Activated CD8-positive, alpha-beta memory T cell treated with anti-CD3 and anti-CD28 coated beads, Interleukin-2, amount 10 ng/mL, durations not matched to agents 7 days and 5 days (primary cell): ENCODE measurements at regions of chr1 and their contacts with region 1.

Region 1: DNA sequence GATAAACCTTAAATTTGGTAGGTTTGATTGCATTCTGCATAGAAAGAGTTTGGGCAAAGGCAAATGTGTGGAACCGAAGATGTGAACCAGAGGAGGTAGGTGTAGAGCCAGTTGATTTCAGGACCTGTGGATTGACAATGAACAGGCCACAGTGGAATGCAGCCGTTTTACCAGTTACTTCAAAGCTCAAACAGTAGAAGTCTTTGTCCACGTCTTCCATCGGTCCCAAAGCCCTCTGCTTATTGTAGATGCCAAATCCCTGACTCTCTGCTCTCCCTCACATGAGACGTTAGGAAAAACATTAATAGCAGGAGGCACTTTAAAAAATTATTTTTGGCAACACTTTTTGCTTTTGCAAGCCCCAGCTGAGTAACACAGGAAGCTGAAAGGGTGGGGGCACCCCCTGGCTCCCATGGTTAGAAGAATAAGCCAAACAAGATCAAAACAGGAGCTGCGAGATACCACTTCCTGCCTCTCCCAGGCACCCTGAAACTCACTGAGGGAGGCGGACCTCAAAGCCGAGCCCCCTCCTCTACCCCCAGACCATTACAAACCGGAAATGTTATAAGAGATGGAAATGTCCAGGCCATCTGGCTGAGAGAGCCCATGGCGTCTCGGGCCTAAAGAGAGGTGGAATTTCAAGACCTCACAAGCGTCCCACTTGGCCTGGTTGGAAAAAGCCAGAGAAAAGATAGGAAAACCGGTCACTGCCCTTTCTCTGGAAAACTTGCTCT is 13.5 kb downstream of the TRAF3IP3 start:
- DNase-seq: peak; percentile 92
- ATAC-seq: peak; percentile 65
- H3K4me3 Mint-ChIP-seq: no peak overlapping the region
- H3K27ac Mint-ChIP-seq: no peak overlapping the region
- H3K4me1 Mint-ChIP-seq: peaks cover 41% of the 10 kb centered on the region
- H3K27me3 Mint-ChIP-seq: no peaks in the 10 kb centered on the region

Region 2: GRCh38 chr1:209755926-209756614 is 13.3 kb before region 1 on chr1 and contains the start of gene TRAF3IP3:
- CTCF ChIA-PET with region 1: interaction called, 105 read pairs
- DNase-seq: peak; percentile 95
- ATAC-seq: peak; percentile 76
- H3K4me3 Mint-ChIP-seq: peak within 1 kb of the TSS; percentile 95
- H3K27ac Mint-ChIP-seq: peak within 1 kb of the TSS; percentile 93
- H3K4me1 Mint-ChIP-seq: peaks cover 75% of the 10 kb centered on the region
- H3K27me3 Mint-ChIP-seq: no peaks in the 10 kb centered on the region
- total RNA-seq, gene TRAF3IP3: 351 to 406 TPM

Region 3: DNA sequence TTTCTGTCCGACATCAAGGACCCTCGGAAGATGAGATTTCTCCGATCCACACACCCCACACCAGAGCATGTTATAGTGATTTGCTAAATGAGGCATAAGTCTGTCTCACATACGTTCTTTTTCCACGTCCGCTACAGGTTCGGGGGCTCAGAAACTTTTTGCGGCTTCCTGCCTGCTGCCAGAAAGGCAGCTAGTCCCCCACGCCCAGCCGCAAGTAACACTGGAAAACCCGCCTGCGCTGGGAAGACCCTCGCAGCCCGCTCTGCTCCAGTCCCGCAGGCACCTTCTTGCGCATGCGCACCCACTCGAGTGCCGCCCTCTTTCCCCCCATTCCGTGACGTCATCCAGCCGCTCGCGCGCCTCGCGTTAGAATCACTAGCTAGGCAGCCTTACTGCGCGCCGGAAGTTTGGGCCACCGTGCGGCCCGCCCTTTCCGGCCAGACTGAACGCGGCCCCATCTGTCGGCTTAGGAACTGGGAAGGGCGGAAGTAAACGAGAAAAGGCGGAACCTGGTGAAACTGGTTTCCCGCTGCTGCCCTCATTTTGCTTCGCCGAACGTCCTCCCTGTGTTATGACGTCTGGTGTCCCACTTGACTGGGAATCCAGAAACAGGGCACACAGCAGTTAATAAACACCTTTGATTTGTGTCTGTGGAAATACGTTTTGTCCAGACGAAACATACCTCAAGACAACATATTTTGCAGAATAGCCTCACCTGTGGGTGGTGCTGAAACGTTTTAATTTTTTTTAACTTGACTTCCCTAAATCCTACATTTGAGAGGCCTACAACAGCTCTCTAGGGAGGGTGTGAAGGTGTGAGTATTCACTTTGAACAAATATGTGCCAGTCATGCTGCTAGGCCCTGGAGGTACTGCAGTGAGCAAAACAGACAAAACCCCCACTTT is 15.2 kb after region 1 on chr1 and contains the start of gene C1orf74:
- CTCF ChIA-PET with region 1: interaction called, 18 read pairs
- DNase-seq: peak; percentile 99
- ATAC-seq: peak; percentile 99
- H3K4me3 Mint-ChIP-seq: peak within 1 kb of the TSS; percentile 92
- H3K27ac Mint-ChIP-seq: peak within 1 kb of the TSS; percentile 95
- H3K4me1 Mint-ChIP-seq: peaks cover 42% of the 10 kb centered on the region
- H3K27me3 Mint-ChIP-seq: no peaks in the 10 kb centered on the region
- total RNA-seq, gene C1orf74: 2.8 to 3.0 TPM

Region 4: DNA sequence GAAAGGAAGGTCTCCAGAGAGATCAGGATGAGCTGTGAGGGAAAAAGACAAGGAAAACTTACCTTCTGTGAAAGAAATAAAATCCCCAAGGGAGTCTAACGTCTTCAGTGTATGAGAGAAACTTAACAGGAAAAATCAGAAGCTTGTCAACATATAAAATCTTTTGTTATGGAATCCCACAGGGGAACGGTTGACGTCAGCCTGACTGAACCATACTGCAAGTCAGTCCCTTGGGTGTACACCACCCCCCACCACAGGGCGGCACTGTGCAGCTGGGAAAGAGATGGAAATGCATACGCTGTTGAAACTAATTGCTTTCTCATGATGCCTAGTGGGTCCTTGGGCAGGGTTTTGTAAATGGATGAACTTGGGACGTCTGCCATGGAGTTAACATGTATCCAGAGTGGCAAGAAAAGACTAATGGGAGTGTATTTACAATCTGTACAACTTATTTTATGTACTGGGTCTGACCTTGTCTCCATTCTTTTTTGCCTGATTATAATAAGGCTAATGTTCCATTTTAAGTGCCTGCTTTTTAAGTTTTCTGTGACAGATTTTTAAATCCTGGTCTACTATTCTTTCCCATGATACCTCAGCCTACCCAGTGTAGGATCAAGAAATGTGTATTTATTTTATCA is 81.1 kb after region 1 on chr1:
- CTCF ChIA-PET with region 1: no interaction called
- DNase-seq: peak; percentile 49
- ATAC-seq: no peak
- H3K4me3 Mint-ChIP-seq: no peak overlapping the region
- H3K27ac Mint-ChIP-seq: no peak overlapping the region
- H3K4me1 Mint-ChIP-seq: peaks cover 3% of the 10 kb centered on the region
- H3K27me3 Mint-ChIP-seq: no peaks in the 10 kb centered on the region